Cardiac septum (tissue), 1 donor: ENCODE measurements at regions of chr11 and their contacts with region 1.

Region 1: DNA sequence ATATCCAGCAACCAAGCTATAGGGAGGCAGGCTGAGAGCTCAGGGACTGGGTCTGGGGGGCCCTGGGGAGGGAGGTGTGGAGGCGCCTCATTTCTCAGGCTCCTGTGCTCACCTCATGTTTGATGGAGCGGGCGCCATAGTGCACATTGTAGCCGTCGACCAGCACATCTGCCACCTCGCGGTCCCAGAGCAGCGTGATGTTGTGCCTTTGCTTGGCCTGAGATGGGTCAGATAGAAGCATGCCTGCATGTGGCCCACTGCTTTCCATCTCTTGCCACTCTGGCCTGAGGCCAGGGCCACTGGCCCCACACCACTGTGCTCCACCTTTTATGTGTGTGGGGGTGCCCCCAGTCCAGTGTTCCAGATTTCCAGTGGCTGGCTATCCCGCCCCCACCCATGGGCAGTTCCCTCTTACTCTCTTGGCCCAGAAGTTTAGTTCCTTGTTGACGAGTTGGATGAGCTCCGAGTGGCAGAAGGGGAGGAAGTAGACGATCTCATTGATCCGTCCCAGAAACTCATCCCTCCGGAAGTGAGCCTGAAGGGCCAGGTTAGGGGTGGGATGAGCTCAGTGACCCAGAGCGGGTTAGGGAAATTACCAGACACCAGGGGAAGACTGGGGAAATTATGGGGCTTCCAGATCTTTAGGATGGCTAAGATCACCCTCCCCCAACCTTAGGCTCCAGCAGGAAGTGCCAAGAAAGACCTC is 50.1 kb upstream of the PHOX2A start:
- DNase-seq: no peak

Region 2: DNA sequence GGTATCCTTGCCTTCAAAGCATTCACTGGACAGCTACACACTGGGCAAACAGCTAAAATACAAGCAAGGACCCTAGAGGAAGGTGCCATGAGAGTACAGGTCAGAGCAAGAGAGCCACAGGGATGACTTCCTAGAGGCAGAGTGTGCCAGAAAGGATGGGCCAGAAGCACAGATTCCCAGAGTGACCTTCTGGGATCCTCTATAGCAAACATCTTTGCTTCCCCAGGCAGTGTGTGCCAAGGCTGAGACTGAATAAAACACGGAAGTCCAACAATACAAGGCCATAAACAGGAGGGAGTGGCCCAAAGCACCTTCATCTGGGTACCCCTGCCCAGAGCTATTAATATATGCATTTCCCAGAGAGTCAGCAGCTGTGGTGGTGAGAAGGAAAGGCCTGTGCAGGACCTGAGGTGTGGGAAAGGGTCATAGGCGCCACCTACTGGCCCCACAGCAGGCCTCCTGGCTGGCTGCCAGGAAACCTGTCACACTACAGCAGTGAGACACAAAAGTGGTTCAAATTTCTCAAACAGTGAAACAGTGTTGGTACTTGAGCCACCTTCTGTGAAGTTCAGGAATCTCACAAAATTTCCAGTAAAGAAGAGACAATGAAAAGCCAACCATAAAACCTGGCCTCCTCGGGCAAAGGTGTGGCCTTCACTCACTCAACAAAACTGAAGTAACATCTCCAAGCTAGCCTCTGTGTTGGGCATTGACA is 120.0 kb after region 1 on chr11:
- intact Hi-C with region 1: loop called (anchors 10 kb)
- DNase-seq: peak; percentile 92